Sciatic nerve (tissue), 2 donors: ENCODE measurements at regions of chr19 and their contacts with region 1.

Region 1: DNA sequence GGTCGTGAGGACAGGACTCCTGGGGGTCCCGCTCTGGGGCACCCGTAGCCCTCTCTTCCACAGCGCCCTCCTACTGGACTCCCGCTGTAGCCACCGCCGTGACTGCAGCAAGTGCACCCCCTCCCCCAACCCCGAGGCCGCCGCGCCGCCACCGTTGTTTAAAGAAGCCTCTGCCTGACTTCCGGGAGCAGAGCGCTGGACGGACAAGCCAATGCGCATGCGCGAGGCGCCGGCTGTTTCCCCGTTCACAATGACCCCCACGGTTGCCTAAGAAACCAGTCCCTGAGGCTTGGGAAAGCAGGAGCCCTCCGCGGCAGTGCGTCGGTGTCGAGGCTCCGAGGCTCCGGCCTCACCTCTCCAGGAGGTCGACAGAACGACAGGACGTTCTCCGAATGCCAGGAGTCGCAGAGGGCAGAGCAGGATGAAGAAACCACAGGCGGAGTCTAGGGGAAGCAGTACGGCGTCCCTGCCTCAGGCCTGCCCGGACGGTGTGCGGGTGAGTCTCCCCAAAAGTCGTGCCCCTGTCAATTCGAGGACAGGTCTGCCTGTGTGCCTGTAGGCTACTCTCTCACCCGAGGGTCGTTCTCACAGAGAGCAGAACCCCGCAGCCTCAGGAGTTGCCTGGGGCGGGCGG is 70.5 kb upstream of the ZNF420 start:
- DNase-seq: no peak
- ATAC-seq: peak; percentile 78

Region 2: GRCh38 chr19:36252047-36252446 is 755.7 kb before region 1 on chr19:
- intact Hi-C with region 1: loop called (anchors 5 kb)
- DNase-seq: no peak
- ATAC-seq: no peak